ENCODE measurements at regions of chr10 and their contacts with region 1.

Region 1: GRCh38 chr10:73940634-73941221 is 29.8 kb downstream of the PLAU start:
- DNase-seq: peak; percentile 77 to 80
- H3K4me3 ChIP-seq: peak overlapping the region; percentile 15 to 45 (median 23)
- H3K27ac ChIP-seq: peak overlapping the region; percentile 71 to 83
- H3K4me1 ChIP-seq: peaks cover 0 to 3% of the 10 kb centered on the region in 2 donors
- H3K27me3 ChIP-seq: no peaks in the 10 kb centered on the region
- CTCF ChIP-seq: peak; percentile 80 to 97 (median 94)
- POLR2A ChIP-seq: no peak

Region 2: DNA sequence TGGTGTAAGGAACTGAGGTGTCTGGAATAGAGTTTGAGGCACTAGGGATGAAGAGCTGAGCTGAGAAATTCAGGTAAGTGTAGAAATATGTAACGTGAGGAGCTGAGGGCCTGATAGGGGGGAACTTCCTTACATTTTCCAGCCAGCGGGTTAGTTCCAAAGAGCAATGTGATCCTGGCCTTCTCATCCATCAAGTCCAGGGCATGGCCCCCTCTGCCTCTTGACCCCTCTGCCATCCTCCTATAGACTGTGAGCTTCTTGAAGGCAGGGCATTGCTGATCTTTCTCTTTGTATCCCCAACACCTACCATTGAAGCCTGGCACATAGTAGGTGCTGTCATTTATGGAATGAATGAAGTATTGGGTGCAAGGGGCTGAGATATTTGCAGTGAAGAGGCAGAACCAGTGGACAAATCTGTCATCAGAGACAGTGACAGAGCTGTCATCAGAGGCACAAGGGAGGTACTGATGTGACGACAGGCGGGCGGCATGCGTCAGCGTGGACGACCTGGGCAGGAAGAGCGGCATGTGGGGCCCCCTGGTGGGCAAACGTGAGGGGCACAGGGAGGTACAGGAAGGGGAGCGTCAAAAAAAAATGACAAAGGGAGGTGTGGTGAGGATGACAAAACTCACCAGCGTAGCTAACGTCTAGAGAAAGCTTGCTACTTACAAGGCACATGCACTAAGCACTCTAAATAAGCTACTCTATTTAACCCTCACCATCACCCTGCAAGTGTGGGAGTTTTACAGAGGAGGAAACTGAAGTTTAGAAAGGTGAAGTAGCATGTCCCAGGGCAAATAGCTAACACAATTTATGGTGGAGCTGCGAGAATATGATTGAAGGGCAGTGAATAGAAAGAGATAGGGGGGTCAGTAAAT is 61.2 kb before region 1 on chr10:
- intact Hi-C with region 1: loop called (anchors 10 kb)
- DNase-seq: peak; percentile 82 to 86
- H3K4me3 ChIP-seq: no peak overlapping the region
- H3K27ac ChIP-seq: peak overlapping the region in 1 of 2 donors; percentile 10
- H3K4me1 ChIP-seq: no peaks in the 10 kb centered on the region
- H3K27me3 ChIP-seq: no peaks in the 10 kb centered on the region
- CTCF ChIP-seq: peak; percentile 87 to 97 (median 96)
- POLR2A ChIP-seq: no peak

Measured in breast epithelium (tissue), 4 donors.